GM12878 (cell line): ENCODE measurements at regions of chr1 and their contacts with region 1.

Region 1: DNA sequence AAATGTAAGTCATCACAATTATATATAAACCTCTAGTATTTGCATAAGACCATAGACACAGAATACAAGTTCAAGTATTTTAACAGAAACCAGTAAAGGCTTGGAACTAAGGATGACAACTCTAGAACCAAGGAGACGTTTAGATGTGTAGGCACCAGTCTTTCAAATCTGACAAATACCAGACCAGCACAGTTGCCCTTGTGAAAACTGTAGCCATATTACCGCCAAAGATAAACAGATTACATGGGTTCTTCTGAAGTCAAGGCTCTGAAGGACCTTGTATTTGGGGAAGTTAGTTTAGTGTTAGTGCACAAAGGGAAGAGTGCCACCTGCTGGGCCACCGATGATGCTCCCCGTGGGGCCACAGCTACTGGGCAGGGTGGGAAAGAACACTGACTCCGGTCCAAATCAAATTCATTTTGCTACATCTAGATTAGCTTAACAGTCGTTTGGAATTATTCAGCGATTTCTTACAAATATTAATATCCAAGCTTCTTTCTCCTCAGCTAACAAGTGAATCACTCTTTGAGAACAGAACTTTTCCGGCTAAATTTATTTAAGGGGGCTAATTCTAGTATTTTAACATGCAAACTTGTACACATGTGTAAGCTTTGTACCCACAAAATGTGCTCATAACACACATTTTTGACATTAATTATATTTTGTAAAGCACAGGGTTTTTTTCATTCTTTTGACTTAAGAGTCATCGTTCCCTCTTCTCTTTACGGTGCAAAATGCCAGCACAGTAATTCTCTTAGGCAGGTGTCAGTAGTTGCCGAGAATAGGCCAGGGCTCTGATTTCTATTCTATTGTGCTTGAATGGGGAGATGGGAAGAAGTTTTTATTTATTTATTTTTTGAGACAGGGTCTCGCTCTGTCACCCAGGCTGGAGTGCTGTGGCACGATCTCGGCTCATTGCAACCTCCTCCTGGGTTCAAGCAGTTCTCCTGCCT is 8.0 kb upstream of the NIBAN1 start:
- DNase-seq: no peak
- ATAC-seq: peak; percentile 100
- H3K4me3 ChIP-seq: no peak overlapping the region
- H3K27ac ChIP-seq: no peak overlapping the region
- H3K4me1 ChIP-seq: no peaks in the 10 kb centered on the region
- H3K27me3 ChIP-seq: no peaks in the 10 kb centered on the region
- CTCF ChIP-seq: peak; percentile 86 to 95 (median 91)
- EP300 ChIP-seq: no peak
- POLR2A ChIP-seq: no peak
- RAD21 ChIP-seq: peak; percentile 97

Region 2: DNA sequence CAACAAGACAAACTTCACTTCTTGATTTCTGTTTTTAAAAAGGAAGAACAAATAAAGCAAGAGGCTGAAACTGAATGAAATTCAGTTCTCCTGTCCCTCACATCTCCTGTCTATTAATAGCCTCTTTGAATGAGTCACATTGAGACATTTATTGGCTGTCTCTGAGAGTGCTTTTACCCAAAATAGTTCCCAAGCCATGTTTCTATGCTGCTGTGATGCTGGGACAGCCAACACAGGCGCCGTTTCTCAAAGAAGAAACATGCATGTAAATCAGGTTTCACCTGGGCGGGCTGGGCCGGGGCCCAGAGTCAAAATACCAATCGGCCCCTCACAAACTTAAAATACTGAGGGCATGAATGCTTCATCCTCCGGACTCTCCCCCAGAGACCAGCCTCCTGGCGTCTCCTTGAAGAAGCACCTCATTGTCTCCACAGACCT is 332.8 kb before region 1 on chr1:
- CTCF ChIA-PET with region 1: no interaction called
- POLR2A ChIA-PET with region 1: no interaction called
- RAD21 ChIA-PET with region 1: no interaction called
- SMC1A ChIA-PET with region 1: no interaction called
- in situ Hi-C with region 1: no loop called
- intact Hi-C with region 1: no loop called
- DNase-seq: peak; percentile 57
- ATAC-seq: peak; percentile 55
- H3K4me3 ChIP-seq: peak overlapping the region; percentile 50; the same call in 1 of the 2 replicates
- H3K27ac ChIP-seq: peak overlapping the region; percentile 74
- H3K4me1 ChIP-seq: peaks cover 30% of the 10 kb centered on the region
- H3K27me3 ChIP-seq: no peaks in the 10 kb centered on the region
- CTCF ChIP-seq: no peak
- EP300 ChIP-seq: no peak
- POLR2A ChIP-seq: no peak
- RAD21 ChIP-seq: no peak

Region 3: DNA sequence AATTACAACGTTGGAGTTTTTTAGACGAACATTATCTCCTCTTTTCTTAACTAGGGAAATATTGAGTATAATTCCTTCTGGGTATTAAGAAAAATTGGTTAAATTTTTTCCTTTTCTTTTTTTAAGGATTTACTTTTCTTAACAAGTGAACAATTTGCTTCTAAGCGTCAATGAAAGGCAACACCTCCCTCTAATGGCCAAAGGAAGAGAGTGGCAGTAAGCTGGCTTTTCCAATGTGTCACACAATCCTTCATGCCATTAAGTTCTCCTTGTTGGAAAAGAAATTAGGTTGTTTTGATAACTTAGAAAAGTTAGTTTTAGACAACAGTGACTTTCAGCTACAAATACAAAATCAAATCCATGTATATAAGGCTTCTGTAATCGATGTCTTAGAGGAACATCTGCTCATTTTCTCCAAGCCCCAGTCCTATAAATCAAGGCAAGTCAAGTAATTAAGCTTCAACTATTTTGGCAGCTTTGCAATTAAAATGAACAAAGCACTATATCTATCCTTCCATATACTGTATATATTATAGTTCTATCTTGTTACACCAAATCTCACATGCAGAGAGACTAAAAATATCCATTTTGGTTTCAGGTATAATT is 290.5 kb before region 1 on chr1:
- CTCF ChIA-PET with region 1: interaction called, 3 read pairs
- POLR2A ChIA-PET with region 1: no interaction called
- RAD21 ChIA-PET with region 1: no interaction called
- SMC1A ChIA-PET with region 1: no interaction called
- in situ Hi-C with region 1: no loop called
- intact Hi-C with region 1: loop called (anchors 5 kb)
- DNase-seq: no peak
- ATAC-seq: peak; percentile 42; the same call in 1 of the 3 replicates
- H3K4me3 ChIP-seq: no peak overlapping the region
- H3K27ac ChIP-seq: no peak overlapping the region
- H3K4me1 ChIP-seq: no peaks in the 10 kb centered on the region
- H3K27me3 ChIP-seq: no peaks in the 10 kb centered on the region
- CTCF ChIP-seq: peak; percentile 54 to 62 (median 58); a peak in 5 of 6 replicates
- EP300 ChIP-seq: no peak
- POLR2A ChIP-seq: no peak
- RAD21 ChIP-seq: peak; percentile 74

Region 4: DNA sequence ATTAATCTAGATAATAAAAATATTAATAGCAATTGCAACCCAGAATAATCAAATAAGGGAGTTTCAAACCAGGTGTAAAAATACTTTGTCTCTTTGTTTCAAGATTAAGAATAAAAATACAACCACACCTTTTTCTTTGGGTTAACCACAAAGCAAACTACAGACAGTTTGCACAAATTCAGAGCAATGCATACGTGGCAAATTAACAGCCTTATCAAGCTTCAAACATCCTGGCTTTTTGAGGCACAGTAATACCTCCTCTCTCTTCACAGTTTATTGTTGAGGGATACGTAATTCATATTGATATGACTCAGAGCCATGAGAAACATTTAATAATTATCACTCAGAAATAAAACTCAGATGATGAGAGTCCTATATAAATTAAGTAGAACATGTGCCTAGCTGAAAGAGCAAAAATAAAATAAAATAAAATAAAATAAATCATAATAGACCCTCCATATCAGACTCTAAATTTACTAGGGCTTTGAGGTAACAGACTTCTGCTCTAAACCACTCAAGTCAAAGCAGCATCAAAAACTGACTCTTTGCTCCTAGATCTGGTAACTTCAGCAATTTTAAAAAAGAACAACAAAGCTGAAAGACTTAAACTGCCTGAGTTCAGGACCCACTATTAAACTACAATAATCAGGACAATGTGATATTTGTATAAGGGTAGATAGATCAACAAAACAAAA is 239.1 kb before region 1 on chr1:
- CTCF ChIA-PET with region 1: no interaction called
- POLR2A ChIA-PET with region 1: interaction called, 4 read pairs
- RAD21 ChIA-PET with region 1: no interaction called
- SMC1A ChIA-PET with region 1: interaction called, 5 read pairs
- in situ Hi-C with region 1: no loop called
- intact Hi-C with region 1: loop called (anchors 5 kb)
- DNase-seq: peak; percentile 57
- ATAC-seq: peak; percentile 74
- H3K4me3 ChIP-seq: 0 out of 2 replicates have a peak overlapping the region, but pooled peaks have one; percentile 35
- H3K27ac ChIP-seq: peak overlapping the region; percentile 71
- H3K4me1 ChIP-seq: peaks cover 35% of the 10 kb centered on the region
- H3K27me3 ChIP-seq: no peaks in the 10 kb centered on the region
- CTCF ChIP-seq: no peak
- EP300 ChIP-seq: peak; percentile 85 to 87
- POLR2A ChIP-seq: no peak
- RAD21 ChIP-seq: no peak

Region 5: GRCh38 chr1:184818646-184819045 is 163.6 kb before region 1 on chr1:
- CTCF ChIA-PET with region 1: interaction called, 19 read pairs
- POLR2A ChIA-PET with region 1: no interaction called
- RAD21 ChIA-PET with region 1: interaction called, 5 read pairs
- SMC1A ChIA-PET with region 1: interaction called, 219 read pairs
- in situ Hi-C with region 1: no loop called
- intact Hi-C with region 1: no loop called
- DNase-seq: no peak
- ATAC-seq: no peak
- H3K4me3 ChIP-seq: no peak overlapping the region
- H3K27ac ChIP-seq: no peak overlapping the region
- H3K4me1 ChIP-seq: no peaks in the 10 kb centered on the region
- H3K27me3 ChIP-seq: no peaks in the 10 kb centered on the region
- CTCF ChIP-seq: no peak
- EP300 ChIP-seq: no peak
- POLR2A ChIP-seq: no peak
- RAD21 ChIP-seq: no peak

Region 6: GRCh38 chr1:184965944-184966860 is 16.1 kb before region 1 on chr1:
- CTCF ChIA-PET with region 1: interaction called, 35 read pairs
- POLR2A ChIA-PET with region 1: interaction called, 5 read pairs
- RAD21 ChIA-PET with region 1: interaction called, 3 read pairs
- SMC1A ChIA-PET with region 1: interaction called, 10 read pairs
- in situ Hi-C with region 1: no loop called
- intact Hi-C with region 1: no loop called
- DNase-seq: no peak
- ATAC-seq: peak; percentile 17; the same call in 2 of the 3 replicates
- H3K4me3 ChIP-seq: no peak overlapping the region
- H3K27ac ChIP-seq: no peak overlapping the region
- H3K4me1 ChIP-seq: peaks cover 22% of the 10 kb centered on the region
- H3K27me3 ChIP-seq: no peaks in the 10 kb centered on the region
- CTCF ChIP-seq: no peak
- EP300 ChIP-seq: no peak
- POLR2A ChIP-seq: no peak
- RAD21 ChIP-seq: no peak

Region 7: DNA sequence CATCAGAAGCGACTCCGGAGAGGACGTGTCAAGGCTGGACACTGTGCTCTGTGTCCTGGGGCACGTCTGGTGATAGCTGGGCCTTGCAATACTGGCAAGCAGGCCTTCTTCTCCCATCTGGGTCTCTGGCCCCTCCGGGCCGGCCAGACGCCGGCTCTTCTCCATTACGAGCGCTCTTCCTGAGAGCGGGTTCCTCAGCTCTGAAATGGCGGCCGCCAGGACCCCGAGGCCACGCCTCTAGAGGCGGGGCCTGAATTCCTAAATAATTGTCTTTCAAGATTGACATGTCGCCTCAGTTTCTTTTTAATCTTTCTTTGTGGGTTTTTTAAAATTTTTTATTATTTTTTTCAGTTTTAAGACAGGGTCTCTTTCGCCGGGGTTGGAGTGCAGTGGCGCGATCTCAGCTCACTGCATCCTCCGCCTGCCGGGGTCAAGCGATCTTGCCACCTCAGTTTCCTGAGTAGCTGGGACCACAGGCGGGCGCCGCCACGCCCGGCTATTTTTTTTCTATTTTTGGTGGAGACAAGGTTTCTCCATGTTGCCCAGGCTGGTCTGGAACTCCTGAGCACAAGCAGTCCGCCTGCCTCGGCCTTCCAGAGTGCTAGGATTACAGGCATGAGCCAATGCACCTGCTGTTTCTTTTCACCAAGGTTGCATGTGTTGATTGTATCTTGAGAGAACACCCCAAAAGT is 72.2 kb after region 1 on chr1:
- CTCF ChIA-PET with region 1: no interaction called
- POLR2A ChIA-PET with region 1: no interaction called
- RAD21 ChIA-PET with region 1: no interaction called
- SMC1A ChIA-PET with region 1: no interaction called
- in situ Hi-C with region 1: no loop called
- intact Hi-C with region 1: no loop called
- DNase-seq: no peak
- ATAC-seq: no peak
- H3K4me3 ChIP-seq: no peak overlapping the region
- H3K27ac ChIP-seq: no peak overlapping the region
- H3K4me1 ChIP-seq: no peaks in the 10 kb centered on the region
- H3K27me3 ChIP-seq: no peaks in the 10 kb centered on the region
- CTCF ChIP-seq: no peak
- EP300 ChIP-seq: no peak
- POLR2A ChIP-seq: no peak
- RAD21 ChIP-seq: no peak